B cell (primary cell): ENCODE measurements at regions of chr17 and their contacts with region 1.

Region 1: GRCh38 chr17:58531661-58532554 is 17.5 kb upstream of the MTMR4 start:
- DNase-seq: peak; percentile 76
- ATAC-seq: peak; percentile 96
- H3K4me3 ChIP-seq: peak overlapping the region in 4 of 5 experiments; percentile 28 to 63 (median 51)
- H3K4me3 Mint-ChIP-seq: peak overlapping the region; percentile 76
- H3K27ac ChIP-seq: no peak overlapping the region
- H3K27ac Mint-ChIP-seq: no peak overlapping the region
- H3K4me1 ChIP-seq: peaks cover 12 to 13% of the 10 kb centered on the region in 2 donors
- H3K4me1 Mint-ChIP-seq: peaks cover 5% of the 10 kb centered on the region
- H3K27me3 ChIP-seq: peaks cover 0 to 52% (median 15%) of the 10 kb centered on the region in 4 experiments
- H3K27me3 Mint-ChIP-seq: peaks cover 45% of the 10 kb centered on the region
- CTCF ChIP-seq: no peak

Region 2: DNA sequence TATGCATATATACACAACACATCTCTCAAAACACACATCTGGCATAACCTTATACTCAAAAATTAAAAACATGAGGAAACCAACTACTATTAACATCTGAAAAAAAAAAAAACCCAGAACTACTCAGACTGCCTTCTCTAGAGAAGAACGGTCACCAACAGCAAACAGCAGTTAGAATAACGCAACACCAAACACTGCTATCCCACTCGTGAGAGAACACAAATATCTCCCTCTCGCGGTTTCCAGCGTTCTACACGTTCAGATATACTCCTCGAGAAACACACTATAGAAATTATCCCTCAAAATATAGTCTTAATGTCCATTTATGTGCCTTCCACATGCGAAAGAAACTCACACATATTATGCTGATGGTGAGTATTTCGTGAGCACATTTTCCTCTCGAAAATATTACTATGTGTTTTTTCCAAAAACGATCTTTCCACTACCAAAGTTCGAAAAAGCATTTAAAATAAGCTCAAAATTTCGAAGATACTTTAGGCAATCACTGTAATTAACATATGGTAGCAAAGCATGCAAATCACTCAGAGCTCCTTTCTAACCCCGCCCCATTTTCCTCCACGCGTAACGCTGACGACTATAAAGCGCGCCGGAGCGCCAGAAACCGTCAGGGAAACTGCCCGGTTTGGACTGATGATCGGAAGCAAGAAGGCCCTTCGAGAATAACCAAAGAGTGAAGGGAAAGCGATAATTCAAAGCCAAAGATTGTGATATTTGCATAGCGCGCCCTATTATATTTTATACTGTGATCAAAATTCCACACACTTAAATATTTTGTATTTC is 99.8 kb after region 1 on chr17:
- CTCF ChIA-PET with region 1: no interaction called
- POLR2A ChIA-PET with region 1: no interaction called
- intact Hi-C with region 1: loop called (anchors 1 kb)
- DNase-seq: peak; percentile 97
- ATAC-seq: peak; percentile 82
- H3K4me3 ChIP-seq: peak overlapping the region; percentile 28 to 84 (median 57)
- H3K4me3 Mint-ChIP-seq: no peak overlapping the region
- H3K27ac ChIP-seq: peak overlapping the region; percentile 81 to 99
- H3K27ac Mint-ChIP-seq: no peak overlapping the region
- H3K4me1 ChIP-seq: peaks cover 9% of the 10 kb centered on the region in 2 donors
- H3K4me1 Mint-ChIP-seq: peaks cover 12% of the 10 kb centered on the region
- H3K27me3 ChIP-seq: no peaks in the 10 kb centered on the region
- H3K27me3 Mint-ChIP-seq: no peaks in the 10 kb centered on the region
- CTCF ChIP-seq: peak; percentile 43

Region 3: GRCh38 chr17:58692239-58693055 is 160.5 kb after region 1 on chr17 and contains the start of gene RAD51C:
- CTCF ChIA-PET with region 1: no interaction called
- POLR2A ChIA-PET with region 1: no interaction called
- intact Hi-C with region 1: loop called (anchors 5 kb)
- DNase-seq: peak; percentile 92
- ATAC-seq: peak; percentile 99
- H3K4me3 ChIP-seq: peak within 1 kb of the TSS; percentile 64 to 88 (median 81)
- H3K4me3 Mint-ChIP-seq: peak within 1 kb of the TSS; percentile 90
- H3K27ac ChIP-seq: peak within 1 kb of the TSS; percentile 66 to 70
- H3K27ac Mint-ChIP-seq: peak within 1 kb of the TSS; percentile 95
- H3K4me1 ChIP-seq: peaks cover 14 to 17% of the 10 kb centered on the region in 2 donors
- H3K4me1 Mint-ChIP-seq: peaks cover 24% of the 10 kb centered on the region
- H3K27me3 ChIP-seq: no peaks in the 10 kb centered on the region
- H3K27me3 Mint-ChIP-seq: no peaks in the 10 kb centered on the region
- CTCF ChIP-seq: no peak
- total RNA-seq, gene RAD51C: 33.2 and 35.0 TPM in 2 replicates